ENCODE measurements at regions of chr7 and their contacts with region 1.

Region 1: DNA sequence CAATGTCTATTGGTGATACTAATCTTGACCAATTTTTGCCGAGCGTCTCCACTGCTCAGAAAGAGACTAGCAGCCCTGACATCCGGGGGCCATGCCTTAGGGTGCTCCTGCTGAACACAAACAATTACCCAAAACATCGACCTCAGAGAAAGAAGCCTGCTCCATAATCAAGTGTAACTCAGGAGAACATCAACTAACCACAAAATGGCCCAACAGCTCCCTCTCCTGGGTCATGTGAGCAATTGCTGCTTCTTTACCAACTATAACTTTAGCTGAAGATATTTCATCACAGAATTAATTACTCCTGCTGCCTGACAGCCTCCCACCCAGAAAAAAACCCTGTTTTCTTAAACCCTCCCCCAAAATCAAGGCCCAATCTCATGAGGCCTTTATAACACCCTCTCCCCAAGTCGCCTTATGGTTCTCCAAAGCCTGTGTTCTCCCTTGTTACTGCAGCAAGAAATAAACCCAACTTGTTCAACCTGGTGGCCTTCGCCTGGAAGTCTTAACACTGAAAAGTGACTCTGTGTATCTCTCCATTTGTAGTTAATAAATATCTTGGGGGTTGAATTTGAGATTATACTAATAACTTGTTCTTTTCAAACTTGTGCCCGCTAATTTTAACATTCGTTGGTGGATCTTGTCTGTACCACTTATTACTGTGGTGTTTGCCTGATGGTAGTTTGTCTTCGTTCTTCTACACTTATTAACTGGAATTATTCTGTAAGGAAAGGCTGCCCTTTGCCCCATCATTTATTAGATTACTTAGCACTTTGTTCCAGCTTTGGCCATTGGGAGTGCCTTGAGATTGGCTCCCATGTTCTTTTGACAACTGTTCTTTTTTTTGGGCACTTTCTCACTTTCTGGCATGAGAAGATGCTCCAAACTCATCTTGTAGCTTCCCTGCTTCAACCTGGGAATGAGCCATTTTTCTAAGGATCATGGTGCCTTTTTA is 21.2 kb upstream of the RAMP3 start:
- DNase-seq: peak; percentile 65 to 77 (median 74)
- H3K4me3 ChIP-seq: no peak overlapping the region
- H3K4me3 Mint-ChIP-seq: peak overlapping the region in 1 of 8 donors; percentile 55
- H3K27ac ChIP-seq: no peak overlapping the region
- H3K27ac Mint-ChIP-seq: peak overlapping the region in 5 of 7 donors; percentile 1 to 86 (median 73)
- H3K4me1 ChIP-seq: peaks cover 4% of the 10 kb centered on the region
- H3K4me1 Mint-ChIP-seq: peaks cover 6 to 11% (median 9%) of the 10 kb centered on the region in 4 donors
- H3K27me3 ChIP-seq: no peaks in the 10 kb centered on the region
- H3K27me3 Mint-ChIP-seq: no peaks in the 10 kb centered on the region

Region 2: DNA sequence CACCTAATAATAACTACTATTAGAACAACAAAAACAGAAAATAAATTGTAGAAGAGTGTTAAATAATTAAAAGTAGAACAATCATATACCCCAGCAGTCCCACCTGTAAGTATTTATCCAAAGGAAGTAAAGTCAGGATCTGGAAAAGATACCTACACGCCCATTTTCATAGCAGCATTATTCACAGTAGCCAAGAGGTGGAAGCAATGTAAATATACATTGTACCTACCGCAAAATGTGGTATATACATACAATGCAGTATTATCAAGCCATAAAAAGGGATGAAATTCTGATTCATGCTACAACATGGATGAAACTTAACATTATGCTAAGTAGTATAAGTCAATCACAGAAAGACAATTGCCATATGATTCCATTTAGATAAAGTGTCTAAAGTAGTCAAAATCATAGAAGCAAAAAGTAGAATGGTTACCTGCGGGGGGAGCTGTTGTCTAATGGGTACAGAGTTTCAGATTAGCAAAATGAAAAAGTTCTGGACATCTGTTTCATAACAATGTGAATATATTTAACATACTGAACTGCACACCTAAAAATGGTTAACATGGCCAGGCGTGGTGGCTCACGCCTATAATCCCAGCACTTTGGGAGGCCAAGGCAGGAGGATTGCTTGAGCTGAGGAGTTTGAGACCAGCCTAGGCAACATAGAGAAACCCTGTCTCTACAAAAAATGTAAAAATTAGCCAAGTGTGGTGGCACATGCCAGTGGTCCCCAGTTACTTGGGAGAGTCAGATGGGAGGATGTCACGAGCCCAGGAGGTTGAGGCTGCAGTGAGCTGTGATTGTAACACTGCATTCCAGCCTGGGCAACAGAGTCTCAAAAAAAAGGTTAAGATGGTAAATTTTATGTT is 548.3 kb before region 1 on chr7:
- CTCF ChIA-PET with region 1: interaction called, 7 read pairs
- POLR2A ChIA-PET with region 1: no interaction called
- intact Hi-C with region 1: loop called (anchors 1 kb)
- DNase-seq: peak; percentile 65 to 73 (median 71)
- H3K4me3 ChIP-seq: no peak overlapping the region
- H3K4me3 Mint-ChIP-seq: no peak overlapping the region
- H3K27ac ChIP-seq: no peak overlapping the region
- H3K27ac Mint-ChIP-seq: peak overlapping the region in 5 of 7 donors; percentile 42 to 86 (median 68)
- H3K4me1 ChIP-seq: peaks cover 2% of the 10 kb centered on the region
- H3K4me1 Mint-ChIP-seq: peaks cover 5 to 16% (median 9%) of the 10 kb centered on the region in 4 donors
- H3K27me3 ChIP-seq: no peaks in the 10 kb centered on the region
- H3K27me3 Mint-ChIP-seq: no peaks in the 10 kb centered on the region

Region 3: DNA sequence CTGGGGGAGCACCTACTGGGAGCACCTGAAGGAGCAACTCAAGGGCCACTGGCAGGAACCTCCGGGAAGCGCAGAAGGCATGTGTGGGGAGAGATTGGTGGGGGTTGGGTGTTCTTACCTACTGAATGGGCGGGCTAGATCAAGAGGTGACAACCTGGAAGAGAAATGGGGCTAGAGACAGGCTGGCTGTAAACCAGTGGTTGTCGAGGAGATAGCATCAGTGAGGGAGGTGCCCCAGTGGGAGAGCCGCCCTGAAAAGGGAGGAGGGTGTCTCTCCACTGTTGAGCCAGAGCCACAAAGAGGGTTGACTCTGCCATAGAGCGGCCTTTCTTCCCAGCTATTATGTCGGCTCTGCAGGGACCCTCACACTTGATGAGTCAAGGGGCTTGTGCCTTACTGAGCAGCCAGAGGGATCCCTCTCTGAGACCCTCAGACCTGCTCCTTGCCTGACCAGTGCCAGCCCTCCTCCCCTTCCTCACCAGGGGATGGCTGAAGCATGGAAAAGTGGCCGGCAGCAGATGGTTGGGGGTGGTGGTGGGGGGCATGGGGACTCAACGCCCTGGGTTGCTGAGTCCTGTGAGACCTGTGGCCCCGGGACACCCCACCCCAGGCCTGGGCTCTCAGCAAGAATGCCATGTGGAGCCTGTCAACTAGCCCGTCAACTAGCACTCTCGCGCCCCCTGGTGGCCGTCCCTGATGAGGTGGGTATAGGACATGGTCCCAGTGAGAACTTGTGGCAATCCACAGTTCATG is 214.6 kb before region 1 on chr7:
- CTCF ChIA-PET with region 1: interaction called, 25 read pairs
- POLR2A ChIA-PET with region 1: no interaction called
- intact Hi-C with region 1: loop called (anchors 1 kb)
- DNase-seq: peak; percentile 83 to 91 (median 86)
- H3K4me3 ChIP-seq: no peak overlapping the region
- H3K4me3 Mint-ChIP-seq: no peak overlapping the region
- H3K27ac ChIP-seq: no peak overlapping the region
- H3K27ac Mint-ChIP-seq: peak overlapping the region in 5 of 7 donors; percentile 37 to 90 (median 81)
- H3K4me1 ChIP-seq: peaks cover 4% of the 10 kb centered on the region
- H3K4me1 Mint-ChIP-seq: peaks cover 0 to 10% (median 7%) of the 10 kb centered on the region in 4 donors
- H3K27me3 ChIP-seq: no peaks in the 10 kb centered on the region
- H3K27me3 Mint-ChIP-seq: peaks cover 0 to 2% of the 10 kb centered on the region in 2 donors

Region 4: DNA sequence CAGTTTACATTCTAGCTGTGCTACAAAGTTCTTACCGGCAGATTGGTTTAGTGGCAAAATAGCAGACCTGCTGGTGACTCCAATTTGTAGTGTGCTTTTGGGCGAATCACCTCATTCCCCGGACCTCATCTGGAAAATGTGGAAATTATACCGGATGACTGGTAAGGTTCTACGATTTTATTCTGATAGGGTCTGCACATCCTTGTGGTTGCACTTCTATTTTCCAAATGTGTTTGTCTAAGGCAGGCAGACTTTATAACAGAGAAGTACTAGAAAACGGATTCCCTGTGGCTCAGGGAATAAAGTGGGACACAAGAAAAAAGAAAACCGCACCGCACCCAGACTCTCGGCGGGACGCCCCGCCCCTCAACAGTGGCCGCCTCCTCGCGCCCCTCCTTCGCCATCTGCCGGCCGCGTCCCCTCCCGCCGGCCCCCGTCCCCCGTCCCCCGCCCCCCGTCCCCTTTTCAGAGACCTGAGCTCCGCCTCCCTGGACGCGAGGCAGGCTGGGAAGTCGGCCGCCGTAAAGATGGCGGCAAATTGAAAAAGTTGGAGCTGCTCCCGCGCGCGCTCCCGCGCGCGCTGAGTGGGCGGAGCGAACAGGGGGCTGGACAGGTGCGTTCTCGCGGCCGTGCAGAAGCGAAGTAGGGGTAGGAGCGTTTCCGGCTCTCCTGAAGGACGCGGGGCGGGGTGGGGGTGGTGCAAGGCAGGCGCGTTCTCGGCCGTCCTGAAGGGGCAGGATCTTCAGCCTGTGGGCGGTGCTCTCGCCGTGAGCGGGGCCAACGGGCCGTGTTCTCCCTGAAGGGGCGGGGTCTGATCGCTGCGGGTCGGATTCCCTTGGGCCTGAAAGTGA is 136.9 kb before region 1 on chr7:
- CTCF ChIA-PET with region 1: interaction called, 15 read pairs
- POLR2A ChIA-PET with region 1: interaction called, 6 read pairs
- intact Hi-C with region 1: no loop called
- DNase-seq: peak; percentile 98 to 99 (median 99)
- H3K4me3 ChIP-seq: peak overlapping the region; percentile 18 to 60
- H3K4me3 Mint-ChIP-seq: peak overlapping the region; percentile 94 to 99 (median 96)
- H3K27ac ChIP-seq: peak overlapping the region; percentile 74
- H3K27ac Mint-ChIP-seq: peak overlapping the region; percentile 94 to 99 (median 97)
- H3K4me1 ChIP-seq: peaks cover 66% of the 10 kb centered on the region
- H3K4me1 Mint-ChIP-seq: peaks cover 38 to 63% (median 51%) of the 10 kb centered on the region in 4 donors
- H3K27me3 ChIP-seq: no peaks in the 10 kb centered on the region
- H3K27me3 Mint-ChIP-seq: no peaks in the 10 kb centered on the region

Region 5: DNA sequence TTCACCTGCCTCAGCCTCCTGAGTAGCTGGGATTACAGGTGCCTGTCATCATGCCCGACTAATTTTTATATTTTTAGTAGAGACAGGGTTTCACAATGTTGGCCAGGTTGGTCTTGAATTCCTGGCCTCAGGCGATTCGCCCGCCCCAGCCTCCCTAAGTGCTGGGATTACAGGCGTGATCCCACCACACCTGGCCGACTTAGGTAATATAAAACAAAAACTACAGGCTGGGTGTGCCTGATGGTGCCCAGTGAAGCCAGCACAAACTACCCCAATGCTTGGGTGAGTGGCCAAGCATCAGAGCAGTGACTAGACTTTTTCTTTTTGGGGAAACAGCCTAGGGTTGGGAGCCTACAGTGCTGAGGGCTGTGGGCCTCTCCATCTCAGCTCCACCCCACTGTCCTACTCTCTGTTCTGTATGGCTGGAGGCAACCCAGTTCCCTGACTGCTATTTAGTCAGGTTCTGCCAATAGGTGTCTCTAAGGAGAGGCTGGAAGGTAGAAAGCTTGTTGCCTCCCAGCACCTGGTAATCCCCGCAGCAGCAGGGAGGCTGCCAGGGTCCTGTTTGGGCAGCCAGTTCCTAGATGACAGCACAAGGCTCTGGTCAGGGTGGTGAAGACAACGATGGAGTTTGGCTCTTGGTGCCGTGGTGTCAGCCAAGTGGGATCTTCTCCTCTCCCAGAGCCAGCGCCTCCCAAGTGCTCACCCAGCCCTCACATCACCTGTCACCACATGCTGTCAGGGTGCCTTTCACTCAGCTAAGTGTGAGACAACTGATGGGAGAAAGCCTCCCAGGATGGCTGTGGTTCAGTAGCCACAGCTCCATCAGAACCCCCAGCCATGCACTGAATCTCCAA is 37.2 kb before region 1 on chr7:
- CTCF ChIA-PET with region 1: no interaction called
- POLR2A ChIA-PET with region 1: no interaction called
- intact Hi-C with region 1: no loop called
- DNase-seq: no peak
- H3K4me3 ChIP-seq: no peak overlapping the region
- H3K4me3 Mint-ChIP-seq: no peak overlapping the region
- H3K27ac ChIP-seq: no peak overlapping the region
- H3K27ac Mint-ChIP-seq: no peak overlapping the region
- H3K4me1 ChIP-seq: no peaks in the 10 kb centered on the region
- H3K4me1 Mint-ChIP-seq: no peaks in the 10 kb centered on the region
- H3K27me3 ChIP-seq: no peaks in the 10 kb centered on the region
- H3K27me3 Mint-ChIP-seq: no peaks in the 10 kb centered on the region

Region 6: GRCh38 chr7:45111298-45112223 is 24.8 kb before region 1 on chr7 and contains the start of gene TBRG4:
- CTCF ChIA-PET with region 1: interaction called, 10 read pairs
- POLR2A ChIA-PET with region 1: interaction called, 6 read pairs
- intact Hi-C with region 1: no loop called
- DNase-seq: peak; percentile 91 to 94 (median 94)
- H3K4me3 ChIP-seq: peak within 1 kb of the TSS; percentile 94 to 95
- H3K4me3 Mint-ChIP-seq: peak within 1 kb of the TSS; percentile 91 to 99 (median 97)
- H3K27ac ChIP-seq: peak within 1 kb of the TSS; percentile 87
- H3K27ac Mint-ChIP-seq: peak within 1 kb of the TSS; percentile 97 to 100 (median 99)
- H3K4me1 ChIP-seq: peaks cover 48% of the 10 kb centered on the region
- H3K4me1 Mint-ChIP-seq: peaks cover 28 to 60% (median 44%) of the 10 kb centered on the region in 4 donors
- H3K27me3 ChIP-seq: no peaks in the 10 kb centered on the region
- H3K27me3 Mint-ChIP-seq: peaks cover 4% of the 10 kb centered on the region in 2 donors
- total RNA-seq, gene TBRG4: 103 to 129 TPM

Region 7: DNA sequence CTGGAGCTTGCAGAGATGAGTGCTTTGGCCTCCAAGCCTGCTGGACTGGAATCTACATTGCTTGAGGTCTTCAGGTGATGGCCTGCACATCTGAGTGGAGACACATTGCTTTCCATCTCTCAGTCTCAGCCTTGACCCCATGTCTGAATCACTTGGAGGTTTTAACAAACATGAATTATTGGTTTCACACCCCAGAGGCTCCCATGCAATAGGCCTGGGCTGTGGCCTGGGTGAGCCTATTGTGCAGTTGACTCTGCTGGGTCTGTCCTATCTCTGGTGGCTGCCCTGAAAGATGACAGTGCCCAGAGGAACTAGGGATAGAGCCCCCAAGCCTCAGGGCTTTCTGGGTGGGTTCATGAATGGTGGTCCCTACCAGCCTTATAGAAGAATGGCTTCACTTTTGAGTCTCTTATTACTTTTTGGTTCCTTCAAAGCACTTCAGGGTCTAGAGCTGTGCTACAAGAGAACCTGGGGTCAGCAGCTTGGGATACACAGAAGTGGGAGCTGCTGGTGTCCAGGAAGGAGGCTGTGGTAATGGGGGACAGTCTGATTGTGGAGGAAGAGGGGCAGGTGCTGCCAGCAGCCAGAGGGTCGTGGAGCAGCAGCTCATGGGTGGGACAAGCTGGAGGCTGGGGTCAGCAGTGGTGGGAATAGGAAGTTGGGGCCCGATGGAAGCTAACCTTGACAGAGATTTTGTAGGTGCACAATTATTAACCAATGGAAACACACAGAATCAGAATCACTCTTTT is 26.7 kb after region 1 on chr7:
- CTCF ChIA-PET with region 1: no interaction called
- POLR2A ChIA-PET with region 1: no interaction called
- intact Hi-C with region 1: no loop called
- DNase-seq: no peak
- H3K4me3 ChIP-seq: no peak overlapping the region
- H3K4me3 Mint-ChIP-seq: no peak overlapping the region
- H3K27ac ChIP-seq: no peak overlapping the region
- H3K27ac Mint-ChIP-seq: peak overlapping the region in 1 of 7 donors; percentile 34
- H3K4me1 ChIP-seq: no peaks in the 10 kb centered on the region
- H3K4me1 Mint-ChIP-seq: peaks cover 0 to 7% (median 3%) of the 10 kb centered on the region in 4 donors
- H3K27me3 ChIP-seq: no peaks in the 10 kb centered on the region
- H3K27me3 Mint-ChIP-seq: peaks cover 3 to 9% of the 10 kb centered on the region in 2 donors

Region 8: GRCh38 chr7:45420843-45421495 is 284.6 kb after region 1 on chr7:
- CTCF ChIA-PET with region 1: no interaction called
- POLR2A ChIA-PET with region 1: no interaction called
- intact Hi-C with region 1: no loop called
- DNase-seq: no peak
- H3K4me3 ChIP-seq: no peak overlapping the region
- H3K4me3 Mint-ChIP-seq: no peak overlapping the region
- H3K27ac ChIP-seq: no peak overlapping the region
- H3K27ac Mint-ChIP-seq: no peak overlapping the region
- H3K4me1 ChIP-seq: no peaks in the 10 kb centered on the region
- H3K4me1 Mint-ChIP-seq: no peaks in the 10 kb centered on the region
- H3K27me3 ChIP-seq: no peaks in the 10 kb centered on the region
- H3K27me3 Mint-ChIP-seq: peaks cover 6 to 15% of the 10 kb centered on the region in 2 donors